Cardiac septum (tissue), 1 donor: ENCODE measurements at regions of chr1 and their contacts with region 1.

Region 1: DNA sequence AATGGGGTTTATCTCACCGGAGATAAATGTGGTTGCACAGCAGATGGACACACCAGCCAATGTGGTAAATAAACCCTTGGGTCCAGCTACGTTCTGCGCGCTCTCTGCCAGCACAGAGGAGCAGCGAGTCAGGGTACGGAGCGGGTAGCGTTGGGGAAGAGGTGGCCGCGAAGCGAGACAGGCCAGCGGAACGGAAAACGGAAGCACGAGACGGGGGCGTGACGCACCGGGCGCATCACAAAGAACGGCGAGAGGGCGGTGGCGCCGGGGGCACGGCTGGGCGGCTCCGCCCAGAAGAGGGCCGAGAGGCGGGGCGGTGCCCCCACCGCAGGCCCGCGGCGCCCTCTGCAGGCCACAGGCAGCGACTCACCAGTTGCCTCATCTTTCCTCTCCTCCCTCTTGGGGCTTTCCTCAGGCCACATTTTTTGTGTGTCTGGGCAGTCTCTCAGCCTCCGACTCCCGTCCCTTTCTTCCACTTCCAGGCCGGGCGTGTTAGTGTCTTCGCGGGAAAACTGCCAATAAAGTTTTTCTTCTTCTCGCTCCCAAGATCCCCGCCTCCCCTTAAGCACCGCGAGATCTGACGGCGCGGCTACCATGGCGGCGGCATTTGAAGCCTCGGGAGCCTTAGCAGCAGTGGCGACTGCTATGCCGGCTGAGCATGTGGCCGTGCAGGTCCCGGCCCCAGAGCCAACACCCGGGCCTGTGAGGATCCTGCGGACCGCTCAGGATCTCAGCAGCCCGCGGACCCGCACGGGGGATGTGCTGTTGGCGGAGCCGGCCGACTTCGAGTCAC is at the start of gene DDX20:
- DNase-seq: peak; percentile 98
- total RNA-seq, gene DDX20: 7.6 TPM

Region 2: DNA sequence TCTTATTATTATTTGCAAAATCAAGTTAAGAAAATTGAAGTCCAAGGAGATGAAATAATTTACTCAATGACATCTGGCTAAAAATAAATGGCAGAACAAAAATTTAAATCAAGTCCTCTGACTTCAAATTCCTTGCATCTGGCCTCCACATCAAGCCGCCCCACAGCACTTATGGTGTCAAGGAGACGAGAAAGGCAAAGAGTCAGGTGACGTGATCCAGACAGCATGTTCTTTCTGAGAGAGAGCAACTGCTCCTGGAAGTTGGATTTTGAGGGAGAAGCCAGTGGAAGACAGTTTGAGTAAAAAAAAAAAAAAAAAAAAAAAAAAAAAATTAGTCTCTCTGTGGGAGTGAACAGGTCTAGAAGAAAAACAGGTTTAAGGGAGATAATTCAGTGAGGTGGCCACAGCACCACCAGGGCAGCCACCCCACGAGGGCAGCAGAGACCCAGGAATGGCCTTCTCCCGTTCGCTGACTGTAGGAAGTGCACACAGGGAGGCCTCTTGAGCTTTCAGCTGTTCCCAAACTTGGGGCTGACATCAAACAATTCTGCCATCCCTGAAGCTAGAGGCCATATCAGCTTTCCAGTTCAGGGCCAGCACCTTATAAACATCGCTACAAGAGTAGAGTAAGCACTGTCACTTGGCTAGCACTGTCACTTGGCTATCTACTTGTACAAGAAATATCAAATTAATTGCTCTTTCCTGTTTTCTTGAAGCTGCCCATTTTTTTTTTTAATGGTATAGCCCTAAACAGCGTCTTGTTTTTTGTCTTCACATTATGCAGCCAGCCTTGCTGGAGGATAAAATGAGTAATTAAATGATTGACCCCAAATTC is 273.9 kb before region 1 on chr1:
- intact Hi-C with region 1: loop called (anchors 2 kb)
- DNase-seq: peak; percentile 93

Region 3: GRCh38 chr1:111570781-111571181 is 184.7 kb before region 1 on chr1:
- intact Hi-C with region 1: no loop called
- DNase-seq: no peak

Region 4: DNA sequence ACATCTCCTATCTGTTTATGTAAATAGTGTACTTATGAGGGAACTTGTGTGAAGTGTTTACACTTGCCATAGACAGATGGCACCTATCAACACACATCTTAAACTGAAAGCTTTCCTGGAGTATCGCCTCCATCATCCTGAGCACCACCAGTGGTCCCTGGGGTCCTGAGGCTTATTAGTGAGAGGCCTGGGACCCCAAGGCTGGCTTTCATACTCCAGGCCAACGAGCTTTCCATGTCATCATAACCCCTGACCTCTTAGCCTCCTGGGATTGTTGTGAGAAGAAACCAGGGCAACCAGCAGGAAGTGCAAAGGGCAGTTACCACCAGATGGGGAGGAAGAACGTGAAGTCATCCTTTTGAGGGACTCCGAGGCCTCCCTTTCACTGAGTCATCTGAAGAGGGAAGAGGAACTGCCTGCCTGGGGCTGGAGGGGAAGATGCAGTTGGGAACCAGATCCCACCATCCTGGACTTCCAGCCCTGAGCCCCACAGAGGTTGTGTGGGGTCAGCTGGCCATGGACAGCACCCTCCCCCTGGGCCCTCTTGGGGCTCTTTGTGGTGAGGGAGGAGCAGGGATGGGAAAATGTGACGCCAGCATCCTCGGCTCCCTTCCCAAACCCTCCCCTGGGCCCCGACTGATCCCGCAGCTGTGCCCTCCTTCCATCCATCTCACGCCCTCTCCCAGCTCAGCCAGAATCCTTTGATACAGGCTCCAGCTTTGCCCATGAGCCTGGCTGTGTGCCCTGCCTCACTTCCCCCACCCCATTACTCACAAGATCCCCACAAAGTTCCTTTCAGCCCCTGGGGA is 22.1 kb before region 1 on chr1:
- intact Hi-C with region 1: loop called (anchors 1 kb)
- DNase-seq: peak; percentile 92

Region 5: GRCh38 chr1:111739194-111739924 is 16.2 kb before region 1 on chr1 and contains the start of gene INKA2:
- intact Hi-C with region 1: loop called (anchors 1 kb)
- DNase-seq: peak; percentile 98
- total RNA-seq, gene INKA2: 13.7 TPM

Region 6: DNA sequence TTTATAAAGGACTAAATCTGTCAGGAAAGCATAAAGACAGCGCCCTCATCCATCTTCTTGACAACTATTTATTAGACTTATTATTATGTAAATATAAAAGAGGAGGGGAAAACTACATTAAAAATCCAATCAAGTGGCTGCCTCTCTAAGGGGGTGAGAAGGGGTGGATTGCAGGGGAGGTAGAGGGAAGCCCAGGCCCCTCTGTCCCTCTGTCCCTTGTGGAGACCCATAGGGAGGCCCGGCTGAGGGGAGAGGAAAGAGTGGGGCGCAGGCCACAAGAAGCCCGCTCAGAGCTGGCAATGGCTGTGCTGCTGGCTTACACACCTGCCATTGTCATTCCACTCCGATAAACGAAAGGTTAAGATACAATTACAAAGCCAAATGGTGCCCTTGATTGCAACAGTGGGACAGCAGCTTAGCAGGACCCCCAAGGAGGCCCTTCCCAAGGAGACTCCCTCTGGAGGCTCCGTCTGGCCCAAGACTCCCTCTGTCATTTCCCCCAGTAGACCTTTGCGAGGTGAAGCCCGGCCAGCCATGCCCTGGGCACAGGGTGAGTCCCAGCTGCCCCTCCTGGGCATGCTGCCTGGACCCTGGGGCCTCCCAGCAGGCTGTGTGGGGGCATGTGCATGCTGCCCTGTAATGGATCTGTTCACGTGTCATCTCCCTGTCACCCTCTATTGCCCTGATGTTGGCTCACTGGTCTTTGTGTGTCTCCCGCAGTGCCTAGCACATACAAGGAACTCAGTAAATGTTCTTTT is 188.6 kb after region 1 on chr1:
- intact Hi-C with region 1: no loop called
- DNase-seq: no peak